ENCODE measurements at regions of chr17 and their contacts with region 1.

Region 1: GRCh38 chr17:7897773-7898172 is 9.2 kb downstream of the CHD3 start:
- DNase-seq: peak; percentile 21
- ATAC-seq: 0 out of 2 replicates have a peak, but pooled peaks have one; percentile 24
- H3K4me3 ChIP-seq: no peak overlapping the region
- H3K27ac ChIP-seq: no peak overlapping the region
- H3K4me1 ChIP-seq: no peaks in the 10 kb centered on the region
- H3K27me3 ChIP-seq: no peaks in the 10 kb centered on the region
- CTCF ChIP-seq: peak; percentile 53

Region 2: GRCh38 chr17:7887482-7888183 is 10.1 kb before region 1 on chr17:
- CTCF ChIA-PET with region 1: no interaction called
- POLR2A ChIA-PET with region 1: no interaction called
- intact Hi-C with region 1: no loop called
- DNase-seq: peak; percentile 93
- ATAC-seq: peak; percentile 75
- H3K4me3 ChIP-seq: peak overlapping the region; percentile 94
- H3K27ac ChIP-seq: peak overlapping the region; percentile 96
- H3K4me1 ChIP-seq: peaks cover 29% of the 10 kb centered on the region
- H3K27me3 ChIP-seq: no peaks in the 10 kb centered on the region
- CTCF ChIP-seq: no peak

Region 3: DNA sequence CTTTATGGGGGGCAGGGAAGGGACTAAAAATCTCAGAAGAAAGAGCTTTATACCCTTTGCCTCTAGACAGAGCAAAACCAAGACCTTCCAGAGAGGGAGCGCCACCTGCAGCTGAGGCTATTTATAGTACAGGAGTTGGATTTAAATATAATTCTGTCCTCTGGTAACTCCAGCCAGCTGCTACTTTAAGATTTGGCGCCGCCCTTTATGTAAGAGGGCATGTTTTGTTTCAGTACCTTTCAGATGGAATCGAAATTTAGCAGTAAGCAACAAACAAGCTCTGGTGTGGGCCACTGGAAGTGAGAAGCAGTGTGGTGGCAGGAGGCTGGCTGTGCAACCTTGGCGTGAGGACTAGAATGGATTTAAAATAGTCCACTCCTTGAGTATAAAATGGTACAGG is 99.4 kb after region 1 on chr17:
- CTCF ChIA-PET with region 1: no interaction called
- POLR2A ChIA-PET with region 1: interaction called, 27 read pairs
- intact Hi-C with region 1: no loop called
- DNase-seq: peak; percentile 66
- ATAC-seq: peak; percentile 82
- H3K4me3 ChIP-seq: no peak overlapping the region; the same call in 1 of the 2 replicates
- H3K27ac ChIP-seq: no peak overlapping the region
- H3K4me1 ChIP-seq: peaks cover 7% of the 10 kb centered on the region; the same call in 1 of the 2 replicates
- H3K27me3 ChIP-seq: no peaks in the 10 kb centered on the region
- CTCF ChIP-seq: peak; percentile 70

Region 4: GRCh38 chr17:8053598-8053997 is 155.8 kb after region 1 on chr17:
- CTCF ChIA-PET with region 1: no interaction called
- POLR2A ChIA-PET with region 1: no interaction called
- intact Hi-C with region 1: no loop called
- DNase-seq: no peak
- ATAC-seq: no peak
- H3K4me3 ChIP-seq: no peak overlapping the region
- H3K27ac ChIP-seq: no peak overlapping the region
- H3K4me1 ChIP-seq: peaks cover 26% of the 10 kb centered on the region
- H3K27me3 ChIP-seq: no peaks in the 10 kb centered on the region
- CTCF ChIP-seq: no peak

Region 5: GRCh38 chr17:8846768-8847211 is 949.0 kb after region 1 on chr17:
- CTCF ChIA-PET with region 1: no interaction called
- POLR2A ChIA-PET with region 1: no interaction called
- intact Hi-C with region 1: no loop called
- DNase-seq: peak; percentile 35
- ATAC-seq: no peak
- H3K4me3 ChIP-seq: no peak overlapping the region
- H3K27ac ChIP-seq: no peak overlapping the region
- H3K4me1 ChIP-seq: no peaks in the 10 kb centered on the region
- H3K27me3 ChIP-seq: 0 out of 2 replicates have a peak, but pooled peaks cover 6% of the 10 kb centered on the region
- CTCF ChIP-seq: no peak